Sigmoid colon (tissue), 7 donors: ENCODE measurements at regions of chr1 and their contacts with region 1.

Region 1: GRCh38 chr1:41416552-41417334 is 55.5 kb downstream of the FOXO6 start:
- DNase-seq: peak; percentile 79
- H3K4me3 ChIP-seq: no peak overlapping the region
- H3K27ac ChIP-seq: no peak overlapping the region
- H3K4me1 ChIP-seq: peaks cover 0 to 22% (median 10%) of the 10 kb centered on the region in 4 donors
- H3K27me3 ChIP-seq: no peaks in the 10 kb centered on the region
- CTCF ChIP-seq: peak; percentile 90 to 94 (median 92)
- EP300 ChIP-seq: no peak
- POLR2A ChIP-seq: no peak

Region 2: DNA sequence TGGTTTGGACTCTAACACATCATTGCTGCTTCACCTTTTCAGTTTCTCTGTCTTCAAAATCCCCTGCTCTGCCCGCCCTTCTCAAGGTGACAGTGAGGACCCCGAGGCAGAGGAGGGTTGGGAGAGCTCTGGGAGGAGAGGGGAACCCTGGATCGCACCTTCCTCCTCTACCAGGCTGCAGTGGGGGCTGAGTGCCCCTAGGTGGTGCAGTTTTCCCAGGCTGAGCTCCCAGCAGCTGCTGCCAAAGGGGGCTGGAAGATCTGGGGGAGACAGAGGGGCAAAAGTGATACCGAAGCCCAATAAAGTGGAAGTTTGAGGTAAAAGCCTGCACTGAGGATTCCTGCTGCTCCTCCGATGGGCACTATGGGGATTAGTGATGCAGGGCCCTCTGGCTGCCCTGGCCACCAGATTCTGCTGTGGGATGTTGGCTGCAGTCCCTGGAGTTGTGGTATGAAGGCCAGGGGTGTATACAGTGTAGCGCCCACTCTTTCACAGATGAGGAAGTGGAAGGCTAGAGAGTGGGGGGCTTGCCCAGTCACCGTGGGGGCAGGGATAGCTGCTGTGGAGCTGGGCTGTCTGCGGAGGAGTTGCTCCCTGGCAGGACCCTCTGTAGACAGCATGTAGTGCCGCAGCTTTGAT is 133.9 kb before region 1 on chr1:
- intact Hi-C with region 1: loop called (anchors 1 kb)
- DNase-seq: no peak
- H3K4me3 ChIP-seq: no peak overlapping the region
- H3K27ac ChIP-seq: no peak overlapping the region
- H3K4me1 ChIP-seq: peaks cover 0 to 5% (median 2%) of the 10 kb centered on the region in 4 donors
- H3K27me3 ChIP-seq: peaks cover 0 to 13% (median 0%) of the 10 kb centered on the region in 3 donors
- CTCF ChIP-seq: peak; percentile 55 to 86 (median 76)
- EP300 ChIP-seq: no peak
- POLR2A ChIP-seq: no peak

Region 3: DNA sequence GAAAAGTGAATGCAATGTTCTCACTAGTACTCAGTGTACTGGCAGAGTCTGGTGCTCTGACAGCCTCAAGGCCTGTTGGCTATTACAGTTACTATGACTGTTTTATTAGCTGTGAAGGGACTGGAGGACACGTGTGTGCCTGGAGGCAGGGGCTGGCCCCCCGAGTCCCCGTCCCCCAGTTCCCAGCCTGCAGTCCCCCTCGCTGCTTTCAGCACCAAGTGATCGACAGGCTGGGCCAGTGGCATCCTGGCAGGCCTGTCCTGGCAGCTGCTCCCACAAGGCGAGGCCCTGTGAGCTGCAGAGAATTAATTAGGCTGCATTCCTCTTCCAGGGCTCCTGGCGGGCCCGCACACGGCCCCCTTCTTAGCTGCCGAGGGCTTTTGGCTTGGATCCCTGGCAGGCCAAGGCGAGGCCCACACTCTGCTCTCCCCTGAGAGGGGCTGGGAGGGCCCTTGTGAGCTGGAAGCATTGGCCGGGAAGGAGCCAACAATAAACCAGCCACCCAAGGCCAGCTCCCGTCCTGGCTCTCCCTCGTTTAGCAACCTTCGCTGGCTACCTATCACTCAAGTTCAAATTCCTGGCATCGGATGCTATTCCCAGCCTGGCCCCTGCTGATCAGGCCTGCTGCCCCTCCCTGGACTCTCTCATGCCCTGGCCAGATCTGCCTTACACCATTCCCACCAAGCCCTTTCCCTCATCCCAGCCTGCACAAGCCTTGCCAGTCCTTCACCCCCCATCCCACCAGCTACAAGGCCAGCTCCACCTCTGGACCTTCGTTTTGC is 57.9 kb after region 1 on chr1:
- intact Hi-C with region 1: no loop called
- DNase-seq: peak; percentile 89
- H3K4me3 ChIP-seq: no peak overlapping the region
- H3K27ac ChIP-seq: peak overlapping the region; percentile 82 to 93 (median 86)
- H3K4me1 ChIP-seq: peaks cover 0 to 47% (median 44%) of the 10 kb centered on the region in 4 donors
- H3K27me3 ChIP-seq: no peaks in the 10 kb centered on the region
- CTCF ChIP-seq: no peak
- EP300 ChIP-seq: peak; percentile 69 to 97 (median 92)
- POLR2A ChIP-seq: no peak

Region 4: DNA sequence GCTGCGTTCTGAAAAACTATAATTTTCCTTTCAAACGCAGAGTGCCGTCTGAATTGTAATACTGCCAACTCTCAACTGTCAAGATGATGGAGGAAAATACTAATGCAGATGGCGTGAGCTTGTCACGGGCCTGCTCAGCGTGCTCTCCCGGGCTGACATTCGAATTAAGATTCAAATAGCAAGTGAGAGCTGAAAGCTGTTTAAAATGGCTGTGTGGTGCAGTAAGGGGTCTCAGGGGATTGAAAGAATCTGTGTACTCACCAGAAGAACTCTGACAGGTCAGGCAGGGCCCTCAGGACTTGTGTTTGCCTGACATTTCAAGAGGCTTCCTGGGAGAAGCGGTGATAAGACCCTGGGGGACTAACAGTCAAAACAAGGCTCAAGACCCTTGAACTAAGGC is 1006.0 kb after region 1 on chr1:
- intact Hi-C with region 1: no loop called
- DNase-seq: no peak
- H3K4me3 ChIP-seq: no peak overlapping the region
- H3K27ac ChIP-seq: no peak overlapping the region
- H3K4me1 ChIP-seq: peaks cover 0 to 38% (median 34%) of the 10 kb centered on the region in 4 donors
- H3K27me3 ChIP-seq: no peaks in the 10 kb centered on the region
- CTCF ChIP-seq: no peak
- EP300 ChIP-seq: no peak
- POLR2A ChIP-seq: no peak